ENCODE measurements at regions of chr1 and their contacts with region 1.

Region 1: GRCh38 chr1:231866392-231867331 is 240.1 kb downstream of the DISC1 start:
- DNase-seq: peak; percentile 64
- ATAC-seq: peak; percentile 58

Region 2: GRCh38 chr1:231460614-231461013 is 406.0 kb before region 1 on chr1:
- intact Hi-C with region 1: no loop called
- DNase-seq: no peak
- ATAC-seq: no peak

Region 3: DNA sequence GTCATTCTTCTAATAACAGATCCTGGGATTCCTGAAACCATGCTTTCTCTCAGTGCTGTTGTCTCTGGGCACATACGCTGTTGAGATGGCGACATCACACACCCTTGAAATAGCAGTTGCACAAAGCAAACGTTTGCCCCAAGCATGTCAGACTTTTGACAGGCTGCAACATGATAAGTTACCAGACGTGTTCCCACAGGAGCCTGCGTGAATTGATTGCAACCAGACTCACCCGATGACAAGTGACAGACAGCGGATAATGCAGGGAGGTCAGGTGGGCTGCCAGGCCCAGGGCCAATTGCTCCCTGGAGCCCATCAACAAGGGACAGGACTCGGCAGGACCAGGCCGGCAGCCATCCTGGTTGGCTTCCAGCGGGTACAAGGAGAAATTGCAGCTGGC is 452.4 kb after region 1 on chr1:
- intact Hi-C with region 1: loop called (anchors 5 kb)
- DNase-seq: peak; percentile 91
- ATAC-seq: peak; percentile 94

Measured in Right ventricle myocardium superior (tissue), 1 donor.